Prostate gland (tissue), 2 donors: ENCODE measurements at regions of chr1 and their contacts with region 1.

Region 1: DNA sequence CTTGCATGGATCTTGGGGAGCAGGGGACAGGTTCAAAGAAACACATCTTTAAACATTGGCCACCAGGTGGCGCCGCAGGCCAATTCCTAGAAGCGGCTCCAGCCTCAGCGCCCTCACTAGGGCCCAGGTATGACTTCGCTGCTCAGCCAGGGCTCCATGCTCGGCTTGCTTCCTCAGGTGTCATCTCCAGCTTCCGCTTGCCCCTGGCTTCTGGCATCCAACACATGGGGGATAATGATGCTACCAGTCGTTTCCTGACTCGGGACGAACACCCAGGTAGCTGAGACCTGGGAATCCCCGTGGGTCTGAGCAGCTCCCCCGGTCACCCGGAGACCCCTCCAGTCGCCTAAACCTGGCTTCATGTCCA is 8.5 kb upstream of the MEX3A start:
- DNase-seq: peak; percentile 86
- H3K4me3 ChIP-seq: no peak overlapping the region
- H3K27ac ChIP-seq: no peak overlapping the region
- H3K4me1 ChIP-seq: no peaks in the 10 kb centered on the region
- H3K27me3 ChIP-seq: no peaks in the 10 kb centered on the region
- CTCF ChIP-seq: peak; percentile 63 to 93 (median 90)
- POLR2A ChIP-seq: no peak

Region 2: GRCh38 chr1:156138458-156138887 is 47.7 kb after region 1 on chr1:
- intact Hi-C with region 1: loop called (anchors 2 kb)
- DNase-seq: no peak
- H3K4me3 ChIP-seq: no peak overlapping the region
- H3K27ac ChIP-seq: no peak overlapping the region
- H3K4me1 ChIP-seq: no peaks in the 10 kb centered on the region
- H3K27me3 ChIP-seq: no peaks in the 10 kb centered on the region
- CTCF ChIP-seq: no peak
- POLR2A ChIP-seq: no peak

Region 3: GRCh38 chr1:156226116-156226538 is 135.3 kb after region 1 on chr1:
- intact Hi-C with region 1: loop called (anchors 5 kb)
- DNase-seq: no peak
- H3K4me3 ChIP-seq: no peak overlapping the region
- H3K27ac ChIP-seq: no peak overlapping the region
- H3K4me1 ChIP-seq: no peaks in the 10 kb centered on the region
- H3K27me3 ChIP-seq: no peaks in the 10 kb centered on the region
- CTCF ChIP-seq: no peak
- POLR2A ChIP-seq: no peak